H1 (cell line): ENCODE measurements at regions of chr22 and their contacts with region 1.

Region 1: DNA sequence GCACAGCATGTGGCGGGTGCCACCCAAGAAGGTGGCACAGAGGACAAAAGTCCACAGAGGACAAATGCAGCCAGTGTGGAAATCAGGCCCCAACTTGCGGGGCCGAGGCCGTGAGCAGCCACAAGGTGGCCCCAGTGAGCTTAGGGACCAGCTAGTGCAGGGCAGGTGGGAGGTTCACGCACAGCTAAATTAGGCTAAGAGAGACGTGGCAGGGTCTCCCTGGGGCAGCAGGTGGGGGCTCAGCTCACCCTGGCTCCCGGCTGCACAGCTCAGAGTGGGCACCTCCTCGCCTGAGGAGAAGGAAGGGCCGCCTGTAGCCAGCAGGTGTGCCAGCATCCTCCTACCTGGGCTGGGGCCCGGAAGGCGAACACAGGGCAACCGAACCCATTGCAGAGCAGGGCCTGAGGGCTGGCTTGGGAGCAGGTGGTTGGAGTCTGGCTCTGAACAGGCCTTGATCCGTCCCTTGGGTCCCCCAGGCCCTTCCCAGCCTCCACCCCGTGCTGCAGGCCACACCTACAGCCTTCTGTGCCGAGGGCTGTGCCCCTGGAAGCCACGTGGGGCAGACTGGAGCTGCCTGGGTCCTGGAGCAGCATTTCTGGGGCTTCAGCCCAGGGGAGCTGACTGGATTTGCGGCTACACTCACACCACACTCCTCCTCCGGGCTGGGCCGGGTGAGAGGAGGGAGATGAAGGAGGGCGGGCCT is 26.1 kb upstream of the CELSR1 start:
- DNase-seq: peak in 1 of 2 experiments; percentile 91
- H3K4me3 ChIP-seq: 0 out of 8 replicates have a peak overlapping the region, but pooled peaks of 1 of the 4 experiments have one; percentile 18
- H3K27ac ChIP-seq: peak overlapping the region; percentile 26; the same call in 1 of the 2 replicates
- H3K4me1 ChIP-seq: peaks cover 0 to 11% (median 7%) of the 10 kb centered on the region in 4 experiments; a peak in 6 of 7 replicates
- H3K27me3 ChIP-seq: no peaks in the 10 kb centered on the region
- CTCF ChIP-seq: peak; percentile 71 to 94 (median 86)
- EP300 ChIP-seq: no peak
- POLR2A ChIP-seq: peak in 1 of 2 experiments; percentile 22; a peak in 1 of 3 replicates
- RAD21 ChIP-seq: peak; percentile 68 to 74

Region 2: DNA sequence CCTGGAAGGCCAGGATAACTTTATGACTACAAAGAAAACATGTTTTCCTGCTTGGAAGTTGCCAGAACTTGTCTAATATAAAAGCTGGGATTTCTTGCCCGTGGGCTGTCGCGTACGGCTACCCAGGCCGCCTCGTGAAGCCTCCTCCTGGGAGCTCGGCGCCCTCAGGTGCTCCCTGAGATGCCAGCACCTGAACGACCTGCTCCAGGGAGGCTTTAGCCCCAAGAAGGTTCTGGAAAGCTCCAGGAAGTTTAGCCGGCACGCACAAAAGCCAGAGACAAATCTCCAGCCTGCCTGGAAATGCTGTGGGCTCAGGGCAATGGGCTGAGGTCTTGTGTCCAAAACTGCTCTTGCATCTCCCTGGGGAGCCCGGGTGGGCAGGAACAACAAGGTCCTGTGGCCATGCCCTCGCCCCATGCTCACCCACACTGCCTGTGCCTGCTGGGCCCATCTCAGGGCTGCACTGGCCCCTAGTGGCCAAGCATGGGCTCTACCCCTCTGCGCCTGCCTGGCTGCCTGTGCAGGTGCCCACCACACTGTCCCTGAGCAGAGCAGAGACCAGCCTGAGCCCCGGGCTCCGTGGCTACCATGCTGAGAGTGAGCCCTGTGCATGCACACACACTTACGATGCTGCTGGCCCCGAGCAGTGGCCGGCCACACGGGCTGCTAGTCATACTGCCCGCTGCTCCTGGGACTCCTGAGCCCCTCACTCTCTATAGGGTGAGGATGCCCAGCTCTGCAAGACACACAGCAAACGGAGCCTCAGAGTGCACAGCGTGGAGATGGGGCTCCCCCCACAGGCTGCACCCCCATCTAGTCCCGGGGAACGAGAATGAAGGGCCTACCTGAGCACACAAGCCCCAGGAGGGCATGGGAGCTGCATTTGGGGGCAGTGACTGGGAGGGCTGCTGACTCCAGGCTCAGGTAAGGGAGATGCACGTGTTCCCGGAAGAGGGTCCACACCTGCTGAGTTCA is 21.2 kb before region 1 on chr22:
- CTCF ChIA-PET with region 1: interaction called, 12 read pairs
- POLR2A ChIA-PET with region 1: interaction called, 9 read pairs
- DNase-seq: peak in 1 of 2 experiments; percentile 90
- H3K4me3 ChIP-seq: no peak overlapping the region
- H3K27ac ChIP-seq: no peak overlapping the region
- H3K4me1 ChIP-seq: peaks cover 0 to 6% (median 2%) of the 10 kb centered on the region in 4 experiments; a peak in 4 of 7 replicates
- H3K27me3 ChIP-seq: peaks cover 4 to 21% (median 20%) of the 10 kb centered on the region in 4 experiments
- CTCF ChIP-seq: peak; percentile 97 to 100 (median 99)
- EP300 ChIP-seq: no peak
- POLR2A ChIP-seq: no peak
- RAD21 ChIP-seq: peak; percentile 98 to 99

Region 3: DNA sequence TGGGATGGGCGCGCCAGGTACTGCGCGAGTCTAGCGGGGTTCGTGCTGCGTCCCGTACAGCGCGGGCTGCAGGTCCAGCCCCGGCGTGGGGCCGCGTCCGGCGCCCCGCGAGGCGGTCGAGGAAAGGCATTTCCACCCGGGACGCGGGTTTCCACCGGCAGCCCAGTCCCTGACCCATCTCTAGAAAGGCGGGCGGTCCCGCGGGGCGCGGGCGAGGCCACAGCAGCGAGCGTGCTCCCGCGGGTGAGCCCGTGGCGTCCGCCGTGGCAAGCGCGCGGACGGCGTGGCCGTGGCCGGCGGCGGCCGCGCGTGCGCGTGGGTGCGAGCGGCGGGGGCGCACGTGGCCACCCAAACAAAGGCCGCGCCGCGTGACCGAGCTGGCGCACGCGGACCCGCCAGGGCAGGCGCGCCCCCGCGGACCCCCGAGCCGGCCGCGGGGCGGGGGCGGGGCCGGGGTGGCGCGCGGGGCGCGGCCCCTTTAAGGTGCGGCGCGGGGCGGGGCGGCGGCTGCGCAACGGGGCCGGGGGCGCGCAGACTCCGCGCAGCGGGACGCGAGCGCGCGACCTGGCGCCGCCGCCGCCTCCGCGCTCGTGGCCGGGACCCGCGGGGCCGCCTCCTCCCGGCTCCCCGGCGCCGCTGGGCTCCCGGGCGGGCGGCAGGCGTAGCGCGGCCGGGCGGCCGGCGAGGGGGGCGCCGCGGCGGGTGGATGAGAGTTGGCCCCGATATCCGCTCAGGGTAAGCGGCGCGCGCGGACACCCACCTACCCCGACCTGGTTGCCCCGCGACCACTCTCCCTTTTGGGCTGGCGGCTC is 13.2 kb after region 1 on chr22:
- CTCF ChIA-PET with region 1: interaction called, 15 read pairs
- POLR2A ChIA-PET with region 1: interaction called, 11 read pairs
- DNase-seq: no peak
- H3K4me3 ChIP-seq: peak overlapping the region; percentile 34 to 72 (median 49); a peak in 7 of 8 replicates
- H3K27ac ChIP-seq: no peak overlapping the region
- H3K4me1 ChIP-seq: peaks cover 0 to 27% (median 17%) of the 10 kb centered on the region in 4 experiments; a peak in 6 of 7 replicates
- H3K27me3 ChIP-seq: peaks cover 0 to 11% (median 5%) of the 10 kb centered on the region in 4 experiments; a peak in 4 of 7 replicates
- CTCF ChIP-seq: no peak
- EP300 ChIP-seq: no peak
- POLR2A ChIP-seq: no peak
- RAD21 ChIP-seq: no peak

Region 4: DNA sequence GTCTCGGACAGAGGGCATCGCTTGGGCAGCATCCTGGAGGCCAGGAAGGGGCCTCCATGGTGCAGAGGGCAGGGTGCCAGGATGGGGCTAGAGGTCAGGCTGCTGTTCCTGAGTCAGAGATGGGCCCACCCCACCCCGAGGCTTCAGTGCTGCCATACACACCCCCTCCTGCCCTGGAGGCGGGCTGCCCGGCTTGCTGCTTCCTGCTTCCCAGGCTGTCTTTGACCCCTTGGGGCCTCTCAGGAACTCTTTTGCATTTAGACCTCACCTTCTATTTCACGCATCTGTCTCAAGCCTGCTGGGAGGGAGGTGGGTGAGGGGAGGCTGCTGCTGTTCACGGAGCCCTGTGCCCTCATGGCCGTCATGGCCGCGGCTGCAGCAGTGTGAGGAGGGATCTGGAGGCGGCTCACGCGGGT is 50.1 kb after region 1 on chr22:
- CTCF ChIA-PET with region 1: interaction called, 10 read pairs
- POLR2A ChIA-PET with region 1: no interaction called
- DNase-seq: no peak
- H3K4me3 ChIP-seq: no peak overlapping the region
- H3K27ac ChIP-seq: no peak overlapping the region
- H3K4me1 ChIP-seq: peaks cover 0 to 15% (median 3%) of the 10 kb centered on the region in 4 experiments; a peak in 4 of 7 replicates
- H3K27me3 ChIP-seq: no peaks in the 10 kb centered on the region
- CTCF ChIP-seq: no peak
- EP300 ChIP-seq: no peak
- POLR2A ChIP-seq: no peak
- RAD21 ChIP-seq: no peak

Region 5: GRCh38 chr22:46652081-46652846 is 88.7 kb after region 1 on chr22:
- CTCF ChIA-PET with region 1: interaction called, 12 read pairs
- POLR2A ChIA-PET with region 1: no interaction called
- DNase-seq: no peak
- H3K4me3 ChIP-seq: no peak overlapping the region
- H3K27ac ChIP-seq: no peak overlapping the region
- H3K4me1 ChIP-seq: peaks cover 0 to 4% (median 1%) of the 10 kb centered on the region in 4 experiments; a peak in 2 of 7 replicates
- H3K27me3 ChIP-seq: no peaks in the 10 kb centered on the region
- CTCF ChIP-seq: no peak
- EP300 ChIP-seq: no peak
- POLR2A ChIP-seq: no peak
- RAD21 ChIP-seq: no peak

Region 6: DNA sequence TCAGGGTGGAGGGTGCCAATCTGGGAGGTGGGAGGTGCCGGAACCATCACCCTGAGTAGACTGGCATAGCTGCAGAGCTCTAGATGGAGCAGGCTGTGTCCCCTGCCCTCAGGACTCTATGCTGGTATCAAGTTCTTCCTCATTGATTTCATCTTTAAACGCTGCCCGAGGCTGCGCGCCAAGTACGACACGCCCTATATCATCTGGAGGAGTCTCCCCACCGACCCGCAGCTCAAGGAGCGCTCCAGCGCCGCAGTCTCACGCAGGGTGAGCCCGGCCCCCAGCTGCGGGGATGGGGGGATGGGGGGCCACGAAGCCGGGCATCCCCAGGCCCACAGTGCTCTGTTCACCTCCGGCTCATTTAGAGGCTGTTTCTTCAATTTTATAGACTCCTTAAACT is 109.2 kb after region 1 on chr22:
- CTCF ChIA-PET with region 1: interaction called, 32 read pairs
- POLR2A ChIA-PET with region 1: interaction called, 3 read pairs
- DNase-seq: no peak
- H3K4me3 ChIP-seq: no peak overlapping the region
- H3K27ac ChIP-seq: no peak overlapping the region
- H3K4me1 ChIP-seq: no peaks in the 10 kb centered on the region
- H3K27me3 ChIP-seq: no peaks in the 10 kb centered on the region
- CTCF ChIP-seq: no peak
- EP300 ChIP-seq: no peak
- POLR2A ChIP-seq: no peak
- RAD21 ChIP-seq: no peak

Region 7: DNA sequence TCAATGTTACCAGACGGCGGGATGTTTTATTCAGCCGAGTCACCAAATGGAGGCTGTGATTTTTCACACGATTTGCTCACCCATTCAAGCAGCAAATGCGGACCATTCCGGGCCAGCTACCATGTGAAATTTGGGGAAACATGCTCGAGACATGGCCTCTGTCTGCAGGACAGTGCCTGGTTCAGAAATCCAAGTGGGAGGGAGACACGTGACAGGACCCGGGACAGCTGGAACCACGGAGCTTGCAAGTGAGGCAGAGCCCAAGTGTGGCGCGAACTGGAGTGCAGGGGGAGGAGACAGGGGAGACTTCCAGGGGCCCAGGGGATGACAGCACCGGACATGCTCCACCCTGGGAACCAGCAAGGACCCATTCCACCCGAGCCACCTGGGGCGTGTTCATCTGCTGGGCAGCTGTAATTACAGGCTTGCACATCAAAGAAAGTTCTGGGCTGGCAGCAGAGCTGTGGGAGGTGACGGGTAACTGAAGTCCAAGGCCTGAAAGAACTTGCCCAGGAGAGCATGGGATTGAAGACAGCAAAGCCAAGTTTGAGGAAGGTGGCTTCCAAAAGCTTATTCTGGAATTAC is 158.1 kb after region 1 on chr22:
- CTCF ChIA-PET with region 1: interaction called, 12 read pairs
- POLR2A ChIA-PET with region 1: no interaction called
- DNase-seq: no peak
- H3K4me3 ChIP-seq: no peak overlapping the region
- H3K27ac ChIP-seq: no peak overlapping the region
- H3K4me1 ChIP-seq: no peaks in the 10 kb centered on the region
- H3K27me3 ChIP-seq: no peaks in the 10 kb centered on the region
- CTCF ChIP-seq: no peak
- EP300 ChIP-seq: no peak
- POLR2A ChIP-seq: no peak
- RAD21 ChIP-seq: no peak